ENCODE measurements at regions of chr13 and their contacts with region 1.

Region 1: DNA sequence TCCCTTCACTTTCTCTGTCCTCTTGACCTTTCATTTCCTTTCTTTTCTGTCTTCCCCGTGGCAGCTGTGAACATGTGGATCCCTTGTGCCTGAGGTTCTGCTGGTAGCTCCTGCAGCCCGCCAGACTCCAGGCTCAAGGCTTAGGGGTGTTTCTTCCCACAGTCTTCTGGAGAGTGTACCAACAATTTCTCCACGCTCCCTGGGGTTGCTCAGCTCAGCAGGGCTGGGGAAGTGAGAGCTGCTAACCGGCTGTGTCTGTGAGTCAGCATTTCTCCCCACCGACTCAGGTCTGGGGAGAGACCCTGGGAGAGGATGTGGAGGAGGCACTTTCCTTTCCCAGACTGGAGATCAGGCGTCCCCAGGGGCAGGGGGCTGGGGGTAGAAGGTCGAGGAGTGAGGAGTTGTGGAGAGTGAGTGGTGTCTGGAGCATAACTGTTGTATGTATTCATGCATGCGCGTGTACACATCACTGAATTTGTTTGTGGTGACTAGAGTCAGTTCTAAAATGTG is 193.6 kb downstream of the KCNRG start:
- DNase-seq: peak; percentile 54 to 86 (median 70)
- ATAC-seq: peak; percentile 82 to 96 (median 92)
- H3K4me3 ChIP-seq: peak overlapping the region in 10 of 12 donors; percentile 12 to 44 (median 28)
- H3K27ac ChIP-seq: peak overlapping the region in 9 of 12 donors; percentile 6 to 71 (median 42)
- H3K4me1 ChIP-seq: peaks cover 0 to 17% (median 8%) of the 10 kb centered on the region in 12 donors
- H3K27me3 ChIP-seq: no peaks in the 10 kb centered on the region
- CTCF ChIP-seq: no peak
- POLR2A ChIP-seq: no peak

Region 2: DNA sequence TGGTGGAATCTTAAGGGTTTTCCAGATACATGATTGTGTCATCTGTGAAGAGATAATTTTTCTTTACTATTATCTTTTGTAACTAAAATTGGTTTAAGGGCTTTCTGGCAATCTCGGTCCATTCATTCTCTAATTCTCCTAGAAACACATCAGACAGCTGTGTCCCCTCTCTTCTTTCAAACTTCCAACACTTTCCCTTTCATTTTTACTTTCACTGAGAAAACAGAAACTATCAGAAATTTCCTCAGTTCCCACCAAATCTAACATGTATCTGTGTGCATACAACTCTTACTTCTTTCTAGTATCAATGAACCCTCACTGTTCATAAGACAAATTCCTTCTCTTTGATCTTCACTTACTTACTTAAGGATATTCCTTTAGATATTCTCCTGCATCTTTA is 153.4 kb before region 1 on chr13:
- intact Hi-C with region 1: no loop called
- DNase-seq: no peak
- ATAC-seq: no peak
- H3K4me3 ChIP-seq: no peak overlapping the region
- H3K27ac ChIP-seq: peak overlapping the region in 1 of 12 donors; percentile 42
- H3K4me1 ChIP-seq: peaks cover 0 to 19% (median 0%) of the 10 kb centered on the region in 12 donors
- H3K27me3 ChIP-seq: no peaks in the 10 kb centered on the region
- CTCF ChIP-seq: no peak
- POLR2A ChIP-seq: no peak

Region 3: DNA sequence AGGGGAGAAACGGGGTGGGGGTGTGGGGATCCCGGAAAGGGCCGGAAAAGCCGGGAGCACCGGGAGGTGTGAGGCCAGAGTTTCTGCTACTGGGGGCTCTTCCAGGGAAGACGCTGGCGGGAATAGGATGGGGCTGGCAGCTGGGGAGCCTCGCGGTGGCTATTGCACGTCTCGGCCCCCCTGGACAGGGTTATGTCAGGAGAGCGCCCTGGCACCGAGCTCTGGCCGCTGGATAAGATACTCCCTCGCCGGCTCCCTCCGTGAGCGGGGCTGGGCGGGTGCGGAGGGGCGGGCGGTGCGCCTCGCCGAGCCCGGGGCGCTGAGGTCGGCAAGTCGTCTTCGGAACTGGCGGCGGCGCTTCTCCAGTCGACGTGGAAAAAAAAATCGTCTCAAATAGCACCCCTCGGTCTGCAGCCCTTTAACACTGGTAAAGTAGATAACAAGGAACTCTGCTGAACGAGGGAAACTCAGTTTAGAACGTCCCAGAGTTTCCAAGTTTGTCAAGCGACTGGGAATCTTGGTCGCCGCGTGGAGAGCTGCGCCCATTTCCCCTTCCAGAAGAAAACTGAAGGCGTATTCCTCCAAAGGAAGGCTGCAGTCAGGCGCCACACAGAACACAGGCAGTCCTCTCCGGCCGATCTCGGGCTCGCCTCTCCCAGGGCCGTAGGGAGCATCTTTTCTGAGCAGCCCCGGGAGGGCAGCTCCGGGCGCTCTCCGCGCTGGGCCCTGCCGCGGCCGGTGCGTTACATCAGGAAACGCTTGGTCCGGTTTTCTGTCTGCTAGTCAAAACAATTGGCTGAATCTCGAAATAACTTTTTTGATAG is 78.5 kb before region 1 on chr13:
- intact Hi-C with region 1: loop called in 1 of 10 experiments (anchors 10 kb)
- DNase-seq: peak; percentile 49 to 73 (median 52)
- ATAC-seq: peak; percentile 33 to 63 (median 46)
- H3K4me3 ChIP-seq: peak overlapping the region; percentile 24 to 63 (median 56)
- H3K27ac ChIP-seq: peak overlapping the region in 11 of 12 donors; percentile 57 to 84 (median 71)
- H3K4me1 ChIP-seq: peaks cover 0 to 71% (median 17%) of the 10 kb centered on the region in 12 donors
- H3K27me3 ChIP-seq: peaks cover 8 to 42% (median 22%) of the 10 kb centered on the region in 9 donors
- CTCF ChIP-seq: no peak
- POLR2A ChIP-seq: no peak

Measured in heart left ventricle (tissue), 16 donors.